Heart left ventricle (tissue), 16 donors: ENCODE measurements at regions of chr1 and their contacts with region 1.

Region 1: GRCh38 chr1:169348383-169349036 is 19.1 kb downstream of the NME7 start:
- DNase-seq: peak in 1 of 5 donors; percentile 11
- ATAC-seq: peak in 2 of 4 donors; percentile 34 to 42
- H3K4me3 ChIP-seq: no peak overlapping the region
- H3K27ac ChIP-seq: no peak overlapping the region
- H3K4me1 ChIP-seq: no peaks in the 10 kb centered on the region
- H3K27me3 ChIP-seq: no peaks in the 10 kb centered on the region
- CTCF ChIP-seq: peak; percentile 73 to 88 (median 82)
- POLR2A ChIP-seq: no peak

Region 2: DNA sequence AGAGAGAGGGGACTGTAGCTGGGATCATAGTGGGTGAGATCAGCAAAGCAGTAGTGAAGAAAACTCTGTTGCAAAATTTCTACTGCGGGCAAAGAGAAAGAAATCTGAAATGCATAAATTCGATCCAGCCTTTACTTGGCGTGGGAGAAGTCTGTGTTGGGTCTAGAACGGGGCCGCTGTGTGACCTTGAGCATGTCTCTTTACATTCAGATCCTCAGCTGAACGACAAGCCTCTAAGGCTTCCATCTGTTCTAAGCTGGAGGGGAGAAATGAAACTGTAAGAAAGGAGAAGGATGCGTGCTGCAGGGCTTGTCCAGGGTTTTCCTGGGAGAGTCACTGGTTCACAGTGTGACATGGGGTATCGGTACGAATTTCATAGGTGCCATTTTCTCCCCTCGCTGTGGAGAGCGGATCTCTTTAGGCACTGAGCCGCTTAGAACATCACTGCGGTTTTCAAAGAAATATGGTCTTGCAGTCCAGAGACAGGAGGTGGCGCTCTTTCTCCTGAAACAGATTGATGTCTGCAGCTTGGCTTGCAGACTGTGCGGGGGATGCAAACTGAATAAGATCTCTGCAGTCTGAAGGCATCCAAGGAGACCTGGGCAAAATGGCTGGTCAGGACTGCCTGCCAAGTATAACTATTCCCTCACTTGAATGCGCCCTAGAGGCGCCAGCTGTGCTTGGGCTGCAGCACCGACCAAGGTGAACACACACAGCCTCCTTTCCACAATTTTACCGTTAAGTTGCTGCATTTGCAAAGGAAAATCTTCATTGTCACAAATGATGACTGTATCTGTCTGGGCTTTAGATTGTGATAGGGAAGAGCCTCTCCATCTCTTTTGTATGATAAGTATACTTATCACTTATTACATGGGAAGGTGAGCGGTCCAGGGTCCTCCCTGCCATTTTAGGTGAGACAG is 908.8 kb before region 1 on chr1:
- intact Hi-C with region 1: loop called in 9 of 10 experiments (anchors 5 to 10 kb)
- DNase-seq: peak; percentile 68 to 82 (median 73)
- ATAC-seq: peak; percentile 91 to 96 (median 92)
- H3K4me3 ChIP-seq: peak overlapping the region in 9 of 12 donors; percentile 12 to 47 (median 30)
- H3K27ac ChIP-seq: no peak overlapping the region
- H3K4me1 ChIP-seq: peaks cover 0 to 12% (median 2%) of the 10 kb centered on the region in 12 donors
- H3K27me3 ChIP-seq: no peaks in the 10 kb centered on the region
- CTCF ChIP-seq: peak; percentile 48 to 81 (median 70)
- POLR2A ChIP-seq: no peak

Region 3: DNA sequence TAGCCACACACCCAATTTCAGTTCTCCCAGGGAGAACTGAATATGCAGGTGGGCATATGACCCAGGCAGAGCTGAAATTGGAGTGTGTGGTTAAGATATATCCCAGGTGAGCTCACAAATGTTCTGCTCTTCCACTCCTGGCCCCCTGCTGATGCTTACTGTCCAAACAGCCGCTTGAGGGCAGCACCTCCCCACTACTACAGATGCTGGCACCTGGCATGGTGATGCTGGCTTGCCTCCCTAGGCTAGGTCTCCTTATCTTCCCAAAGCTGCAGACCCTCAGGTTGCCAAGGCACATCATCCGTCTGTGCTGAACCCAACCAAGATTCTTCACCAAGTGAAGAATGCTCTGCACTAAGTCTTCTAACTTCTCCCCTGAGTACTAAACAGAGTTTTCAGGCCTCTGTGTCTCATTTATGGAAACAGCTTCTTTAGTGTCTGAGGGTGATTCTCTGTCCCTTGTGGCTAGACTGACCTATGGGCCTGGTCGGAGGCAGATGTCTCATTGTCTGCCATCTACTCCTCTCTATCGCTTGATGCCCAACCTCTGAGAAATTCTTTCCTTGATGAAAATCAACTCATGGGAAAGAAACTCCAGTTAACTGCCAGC is 744.9 kb before region 1 on chr1:
- intact Hi-C with region 1: loop called (anchors 1 to 5 kb)
- DNase-seq: peak; percentile 69 to 86 (median 79)
- ATAC-seq: peak; percentile 63 to 91 (median 90)
- H3K4me3 ChIP-seq: no peak overlapping the region
- H3K27ac ChIP-seq: no peak overlapping the region
- H3K4me1 ChIP-seq: peaks cover 0 to 17% (median under 1%) of the 10 kb centered on the region in 12 donors
- H3K27me3 ChIP-seq: no peaks in the 10 kb centered on the region
- CTCF ChIP-seq: peak; percentile 68 to 90 (median 82)
- POLR2A ChIP-seq: no peak

Region 4: DNA sequence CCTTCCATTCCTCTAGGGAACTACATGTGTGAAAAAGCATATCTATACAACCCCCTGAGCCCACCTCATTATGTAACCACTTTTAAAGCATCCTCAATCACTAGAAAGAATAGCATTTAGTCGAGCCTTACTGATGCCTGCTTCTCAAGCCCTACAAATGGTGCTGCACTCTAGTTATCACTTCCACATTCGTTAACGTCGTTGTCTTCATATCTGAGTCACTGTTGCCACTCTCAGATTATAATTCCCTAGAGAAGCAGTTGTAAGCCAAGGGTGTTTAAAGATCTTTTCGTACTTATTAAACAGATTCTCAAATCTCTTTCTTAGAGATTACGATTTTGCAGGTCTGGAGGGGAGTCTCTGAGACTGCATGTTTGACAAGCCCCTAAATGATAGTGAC is 225.5 kb before region 1 on chr1:
- intact Hi-C with region 1: loop called in 1 of 10 experiments (anchors 10 kb)
- DNase-seq: no peak
- ATAC-seq: no peak
- H3K4me3 ChIP-seq: no peak overlapping the region
- H3K27ac ChIP-seq: peak overlapping the region in 1 of 12 donors; percentile 35
- H3K4me1 ChIP-seq: peaks cover 0 to 69% (median 14%) of the 10 kb centered on the region in 12 donors
- H3K27me3 ChIP-seq: no peaks in the 10 kb centered on the region
- CTCF ChIP-seq: no peak
- POLR2A ChIP-seq: no peak

Region 5: DNA sequence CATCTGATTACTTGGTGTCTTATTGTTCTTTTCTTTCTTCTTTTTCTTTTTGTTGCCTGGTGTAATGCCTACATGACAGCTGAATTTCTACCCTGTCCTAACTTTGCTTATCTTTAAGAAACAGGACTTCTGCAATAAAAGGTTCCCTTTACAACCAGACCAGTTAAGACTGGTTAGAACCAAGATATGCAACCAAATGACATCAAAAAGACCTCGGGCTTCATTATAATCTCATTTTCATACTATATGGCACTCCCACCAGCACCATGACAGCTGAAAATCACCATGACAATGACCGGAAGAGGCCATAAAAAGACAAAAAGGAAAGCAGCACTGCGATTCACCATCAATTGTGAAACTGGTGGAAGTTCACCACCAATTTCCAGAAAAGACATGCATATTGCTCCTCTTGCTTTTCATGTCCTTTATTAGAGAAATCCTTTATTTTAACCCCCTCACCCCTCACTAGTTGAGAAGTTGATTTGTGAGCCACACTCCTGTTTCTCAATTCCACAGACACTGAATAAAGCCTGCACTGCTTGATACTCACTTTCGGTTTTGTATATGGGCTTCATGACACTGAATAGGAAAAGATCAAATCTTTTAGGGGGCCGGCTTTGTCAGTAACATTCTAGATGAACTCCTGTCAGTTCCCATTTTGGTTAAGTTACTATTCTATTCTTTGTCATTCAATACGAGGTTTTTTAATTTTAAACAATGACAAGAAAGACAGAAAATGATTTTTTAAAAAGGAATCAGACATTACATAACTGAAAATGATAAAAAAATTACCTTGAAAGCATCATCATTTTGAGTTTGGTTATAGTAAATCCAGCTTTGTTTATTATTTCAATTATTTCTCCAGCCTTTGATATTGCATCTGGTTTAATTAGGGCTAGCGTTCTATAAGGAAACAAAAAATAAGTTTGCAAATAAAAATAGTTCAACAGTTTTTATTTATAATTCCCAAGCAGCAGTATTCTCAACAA is 39.0 kb before region 1 on chr1:
- intact Hi-C with region 1: no loop called
- DNase-seq: no peak
- ATAC-seq: no peak
- H3K4me3 ChIP-seq: peak overlapping the region in 1 of 12 donors; percentile 42
- H3K27ac ChIP-seq: peak overlapping the region in 1 of 12 donors; percentile 34
- H3K4me1 ChIP-seq: peaks cover 0 to 8% (median 0%) of the 10 kb centered on the region in 12 donors
- H3K27me3 ChIP-seq: no peaks in the 10 kb centered on the region
- CTCF ChIP-seq: no peak
- POLR2A ChIP-seq: no peak